Activated T-helper 2 cell treated with anti-CD3 and anti-CD28 coated beads, Interferon-gamma antibody, Interleukin-2, Interleukin-4, amounts not matched to agents 10 μg/mL and 5 μg/mL and 100 μg/mL, durations not matched to agents 14 hours and 24 hours and 36 hours (primary cell): ENCODE measurements at regions of chr11 and their contacts with region 1.

Region 1: DNA sequence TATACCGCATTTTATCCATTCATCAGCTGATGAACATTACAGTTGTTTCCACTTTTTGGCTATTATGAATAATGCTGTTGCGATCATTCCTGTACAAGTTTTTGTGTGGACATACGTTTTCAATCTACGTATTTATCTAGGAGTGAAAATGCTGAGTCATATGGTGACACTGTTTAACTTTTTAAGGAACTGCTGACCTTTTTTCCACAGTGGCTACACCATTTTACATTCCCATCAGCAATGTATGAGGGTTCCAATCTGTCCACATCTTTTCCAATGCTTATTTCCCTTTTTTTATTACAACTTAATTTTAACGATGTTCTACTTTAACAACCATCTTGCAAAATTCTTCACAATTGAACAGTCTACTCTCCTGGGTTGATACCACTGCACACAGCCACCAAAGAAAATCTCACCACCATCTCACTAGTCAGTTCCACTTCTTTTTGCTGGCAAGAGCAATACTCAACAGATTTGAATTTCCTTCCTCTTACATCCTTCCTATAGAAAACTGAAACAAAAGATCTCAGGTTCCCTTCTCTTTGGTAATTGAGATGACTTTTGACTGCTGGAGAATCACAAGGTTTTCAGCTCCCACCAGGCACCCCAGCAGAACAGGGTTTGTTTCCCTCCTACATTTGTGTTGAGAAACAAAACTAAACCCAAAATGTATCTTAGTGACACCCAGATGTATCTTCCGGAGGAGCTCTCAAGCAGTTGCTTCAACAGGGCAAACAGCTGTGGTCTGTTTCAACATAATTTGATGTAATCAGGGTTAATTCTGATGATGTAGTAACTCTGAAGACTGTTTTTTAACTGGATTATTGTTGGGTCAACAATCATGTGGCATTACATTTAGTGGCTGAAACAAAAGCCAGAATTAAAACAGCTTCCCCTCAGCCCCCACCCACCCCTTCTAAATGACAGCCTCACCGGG is 7.0 kb upstream of the GAB2 start:
- DNase-seq: no peak
- H3K4me3 Mint-ChIP-seq: peak overlapping the region; percentile 55
- H3K27ac Mint-ChIP-seq: peak overlapping the region; percentile 73
- H3K4me1 Mint-ChIP-seq: peaks cover 83% of the 10 kb centered on the region
- H3K27me3 Mint-ChIP-seq: no peaks in the 10 kb centered on the region

Region 2: DNA sequence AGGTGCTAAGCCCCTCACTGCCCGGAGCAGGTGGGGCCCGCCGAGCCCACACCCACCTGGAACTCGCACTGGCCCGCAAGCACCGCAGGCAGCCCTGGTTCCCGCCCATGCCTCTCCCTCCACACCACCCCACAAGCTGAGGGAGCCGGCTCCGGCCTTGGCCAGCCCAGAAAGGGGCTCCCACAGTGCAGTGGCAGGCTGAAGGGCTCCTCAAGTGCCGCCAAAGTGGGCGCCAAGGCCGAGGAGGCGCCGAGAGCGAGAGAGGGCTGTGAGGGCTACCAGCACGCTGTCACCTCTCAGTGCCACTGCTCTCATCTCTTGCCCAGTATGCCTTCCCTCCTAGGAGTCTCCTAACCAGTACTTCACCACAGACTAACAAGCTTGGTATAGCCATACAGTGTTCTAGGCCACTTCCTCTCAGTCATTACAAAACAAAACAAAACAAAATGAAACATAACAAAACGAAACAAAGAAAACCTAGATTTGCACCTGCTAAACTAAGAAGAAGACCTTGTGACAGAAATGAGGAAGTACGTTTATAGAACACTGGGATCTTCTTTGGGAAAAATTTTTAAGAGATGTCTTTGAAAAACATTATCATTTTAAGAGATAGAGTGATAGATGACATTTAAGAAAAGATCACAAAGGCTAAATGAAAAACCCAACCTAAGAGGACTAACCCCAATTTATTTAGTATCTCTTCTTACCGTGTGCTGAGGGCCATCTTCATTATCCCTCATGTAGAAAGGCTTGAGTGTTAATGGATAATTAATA is 40.8 kb after region 1 on chr11:
- intact Hi-C with region 1: loop called (anchors 2 kb)
- DNase-seq: peak; percentile 63
- H3K4me3 Mint-ChIP-seq: peak overlapping the region; percentile 52
- H3K27ac Mint-ChIP-seq: peak overlapping the region; percentile 70
- H3K4me1 Mint-ChIP-seq: peaks cover 41% of the 10 kb centered on the region
- H3K27me3 Mint-ChIP-seq: no peaks in the 10 kb centered on the region